Caco-2 (cell line): ENCODE measurements at regions of chr4 and their contacts with region 1.

Region 1: GRCh38 chr4:141133146-141133998 is at the start of gene RNF150:
- DNase-seq: peak; percentile 53 to 62
- H3K4me3 ChIP-seq: peak within 1 kb of the TSS; percentile 33
- H3K4me3 Mint-ChIP-seq: peak within 1 kb of the TSS; percentile 82
- H3K27ac Mint-ChIP-seq: no peak within 1 kb of the TSS
- H3K4me1 ChIP-seq: no peaks in the 10 kb centered on the region
- H3K4me1 Mint-ChIP-seq: no peaks in the 10 kb centered on the region
- H3K27me3 ChIP-seq: no peaks in the 10 kb centered on the region; the same call in 1 of the 2 replicates
- H3K27me3 Mint-ChIP-seq: peaks cover 17% of the 10 kb centered on the region
- CTCF ChIP-seq: peak; percentile 49 to 58
- total RNA-seq, gene RNF150: 0.14 and 0.42 TPM in 2 replicates

Region 2: GRCh38 chr4:140861359-140862176 is 271.8 kb before region 1 on chr4:
- CTCF ChIA-PET with region 1: interaction called, 3 read pairs
- POLR2A ChIA-PET with region 1: no interaction called
- intact Hi-C with region 1: loop called (anchors 1 kb)
- DNase-seq: peak; percentile 44 to 64
- H3K4me3 ChIP-seq: no peak overlapping the region
- H3K4me3 Mint-ChIP-seq: no peak overlapping the region
- H3K27ac Mint-ChIP-seq: no peak overlapping the region
- H3K4me1 ChIP-seq: no peaks in the 10 kb centered on the region
- H3K4me1 Mint-ChIP-seq: peaks cover 7% of the 10 kb centered on the region
- H3K27me3 ChIP-seq: no peaks in the 10 kb centered on the region
- H3K27me3 Mint-ChIP-seq: peaks cover 13% of the 10 kb centered on the region
- CTCF ChIP-seq: peak; percentile 62 to 70

Region 3: DNA sequence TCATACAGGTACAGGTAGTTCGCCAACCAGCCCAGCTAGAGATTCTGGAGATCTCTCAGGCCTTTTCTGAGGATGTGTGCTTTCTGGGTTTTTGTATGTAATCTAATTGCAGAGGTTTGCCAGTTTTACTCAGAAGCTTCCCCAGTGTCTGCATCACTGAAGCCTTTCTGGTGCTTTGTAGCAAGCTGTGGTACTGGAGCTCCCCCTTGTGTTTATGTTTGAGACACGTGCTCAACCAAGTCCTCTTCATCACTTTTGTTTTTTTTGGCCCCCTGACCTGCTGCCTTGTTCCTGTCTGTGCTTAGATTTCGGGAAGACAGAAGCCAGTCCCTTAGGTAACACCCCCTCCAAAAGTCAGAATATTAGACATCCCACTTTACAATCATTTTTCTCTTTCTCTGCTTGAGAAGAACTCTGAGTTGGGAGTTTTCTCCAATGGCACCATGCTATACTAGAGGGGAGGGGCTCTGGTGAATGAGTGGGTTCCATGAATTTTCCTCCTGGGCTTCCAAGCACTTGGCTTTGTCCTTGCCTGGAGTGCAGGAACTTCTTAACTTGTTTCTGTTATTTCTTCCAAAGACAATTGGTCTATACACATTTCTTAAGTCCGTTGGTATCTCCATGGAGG is 248.8 kb before region 1 on chr4:
- CTCF ChIA-PET with region 1: interaction called, 4 read pairs
- POLR2A ChIA-PET with region 1: no interaction called
- intact Hi-C with region 1: loop called (anchors 5 kb)
- DNase-seq: peak; percentile 66 to 73
- H3K4me3 ChIP-seq: no peak overlapping the region
- H3K4me3 Mint-ChIP-seq: no peak overlapping the region
- H3K27ac Mint-ChIP-seq: no peak overlapping the region
- H3K4me1 ChIP-seq: no peaks in the 10 kb centered on the region
- H3K4me1 Mint-ChIP-seq: no peaks in the 10 kb centered on the region
- H3K27me3 ChIP-seq: no peaks in the 10 kb centered on the region
- H3K27me3 Mint-ChIP-seq: peaks cover 4% of the 10 kb centered on the region
- CTCF ChIP-seq: peak; percentile 73 to 75

Region 4: GRCh38 chr4:140996766-140997165 is 136.6 kb before region 1 on chr4:
- CTCF ChIA-PET with region 1: no interaction called
- POLR2A ChIA-PET with region 1: no interaction called
- intact Hi-C with region 1: loop called (anchors 5 kb)
- DNase-seq: no peak
- H3K4me3 ChIP-seq: no peak overlapping the region
- H3K4me3 Mint-ChIP-seq: no peak overlapping the region
- H3K27ac Mint-ChIP-seq: no peak overlapping the region
- H3K4me1 ChIP-seq: no peaks in the 10 kb centered on the region
- H3K4me1 Mint-ChIP-seq: no peaks in the 10 kb centered on the region
- H3K27me3 ChIP-seq: no peaks in the 10 kb centered on the region
- H3K27me3 Mint-ChIP-seq: peaks cover 13% of the 10 kb centered on the region
- CTCF ChIP-seq: no peak